ENCODE measurements at regions of chr6 and their contacts with region 1.

Region 1: GRCh38 chr6:33535104-33535603 is 44.9 kb downstream of the BAK1 start:
- DNase-seq: no peak
- ATAC-seq: no peak
- H3K4me3 ChIP-seq: no peak overlapping the region
- H3K4me3 Mint-ChIP-seq: no peak overlapping the region
- H3K27ac ChIP-seq: no peak overlapping the region
- H3K27ac Mint-ChIP-seq: peak overlapping the region; percentile 18
- H3K4me1 ChIP-seq: peaks cover 17% of the 10 kb centered on the region
- H3K4me1 Mint-ChIP-seq: peaks cover 18% of the 10 kb centered on the region
- H3K27me3 ChIP-seq: no peaks in the 10 kb centered on the region
- H3K27me3 Mint-ChIP-seq: no peaks in the 10 kb centered on the region
- CTCF ChIP-seq: no peak

Region 2: DNA sequence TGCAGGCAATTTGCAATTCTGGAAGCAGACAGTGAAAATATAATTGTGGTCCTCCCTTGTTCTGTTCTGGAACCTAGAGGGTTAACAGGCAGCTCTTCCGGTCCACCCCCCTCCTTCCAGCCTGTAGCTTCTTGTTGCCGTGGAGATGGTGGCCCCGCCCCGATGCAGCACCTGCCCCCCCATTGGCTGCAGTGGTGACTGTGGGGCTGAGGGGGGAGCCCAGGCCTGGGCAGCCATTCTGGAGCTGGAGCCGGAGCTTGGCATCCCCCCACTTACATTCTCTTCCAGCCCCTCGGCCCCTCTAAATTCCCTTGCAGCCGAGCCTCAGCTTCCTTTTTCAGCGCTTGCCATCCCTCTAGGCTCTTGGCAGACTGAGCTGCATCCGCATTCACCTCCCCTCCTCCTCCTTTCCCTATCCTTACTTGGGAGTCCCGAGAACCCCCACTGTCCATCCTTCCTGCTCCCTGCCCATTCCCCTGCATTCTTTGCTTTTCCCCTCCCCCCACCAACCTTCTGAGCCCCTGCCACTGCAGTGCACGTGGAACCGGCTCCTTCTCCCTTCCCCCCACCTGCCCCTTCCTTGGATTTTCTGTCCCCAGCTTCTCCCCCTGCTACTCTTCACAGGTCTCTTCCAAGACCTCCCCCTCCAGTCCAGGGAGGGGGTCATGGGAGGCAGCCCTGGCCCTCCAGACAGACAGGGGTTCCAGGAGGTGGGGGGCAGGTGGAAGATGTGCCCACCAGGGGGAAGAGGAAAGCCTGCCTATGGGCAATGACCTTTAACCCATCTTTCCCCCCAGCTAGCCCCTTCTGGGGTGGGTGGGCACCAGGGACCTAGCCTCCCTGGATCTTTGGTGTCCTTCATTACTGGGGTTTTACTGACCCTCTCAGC is 103.9 kb before region 1 on chr6:
- CTCF ChIA-PET with region 1: no interaction called
- POLR2A ChIA-PET with region 1: interaction called, 5 read pairs
- intact Hi-C with region 1: loop called in 1 of 2 experiments (anchors 2 kb)
- DNase-seq: peak; percentile 74 to 92 (median 85)
- ATAC-seq: peak; percentile 66
- H3K4me3 ChIP-seq: peak overlapping the region; percentile 71
- H3K4me3 Mint-ChIP-seq: peak overlapping the region; percentile 93
- H3K27ac ChIP-seq: peak overlapping the region; percentile 52 to 64
- H3K27ac Mint-ChIP-seq: peak overlapping the region; percentile 92
- H3K4me1 ChIP-seq: peaks cover 63% of the 10 kb centered on the region
- H3K4me1 Mint-ChIP-seq: peaks cover 65% of the 10 kb centered on the region
- H3K27me3 ChIP-seq: no peaks in the 10 kb centered on the region
- H3K27me3 Mint-ChIP-seq: no peaks in the 10 kb centered on the region
- CTCF ChIP-seq: no peak

Region 3: GRCh38 chr6:33547499-33547898 is 12.3 kb after region 1 on chr6:
- CTCF ChIA-PET with region 1: interaction called, 3 read pairs
- POLR2A ChIA-PET with region 1: interaction called, 11 read pairs
- intact Hi-C with region 1: no loop called
- DNase-seq: no peak
- ATAC-seq: no peak
- H3K4me3 ChIP-seq: no peak overlapping the region
- H3K4me3 Mint-ChIP-seq: no peak overlapping the region
- H3K27ac ChIP-seq: no peak overlapping the region
- H3K27ac Mint-ChIP-seq: peak overlapping the region; percentile 30
- H3K4me1 ChIP-seq: peaks cover 16% of the 10 kb centered on the region
- H3K4me1 Mint-ChIP-seq: peaks cover 22% of the 10 kb centered on the region
- H3K27me3 ChIP-seq: no peaks in the 10 kb centered on the region
- H3K27me3 Mint-ChIP-seq: no peaks in the 10 kb centered on the region
- CTCF ChIP-seq: no peak

Region 4: GRCh38 chr6:33579828-33580714 is 44.9 kb after region 1 on chr6 and contains the start of gene BAK1:
- CTCF ChIA-PET with region 1: interaction called, 5 read pairs
- POLR2A ChIA-PET with region 1: interaction called, 23 read pairs
- intact Hi-C with region 1: loop called in 1 of 2 experiments (anchors 2 kb)
- DNase-seq: peak; percentile 64 to 92 (median 78)
- ATAC-seq: peak; percentile 93
- H3K4me3 ChIP-seq: peak within 1 kb of the TSS; percentile 99
- H3K4me3 Mint-ChIP-seq: peak within 1 kb of the TSS; percentile 96
- H3K27ac ChIP-seq: peak within 1 kb of the TSS; percentile 82 to 88
- H3K27ac Mint-ChIP-seq: peak within 1 kb of the TSS; percentile 97
- H3K4me1 ChIP-seq: peaks cover 51% of the 10 kb centered on the region
- H3K4me1 Mint-ChIP-seq: peaks cover 44% of the 10 kb centered on the region
- H3K27me3 ChIP-seq: no peaks in the 10 kb centered on the region
- H3K27me3 Mint-ChIP-seq: no peaks in the 10 kb centered on the region
- CTCF ChIP-seq: peak; percentile 63
- total RNA-seq, gene BAK1: 38.3 to 40.8 TPM

Measured in CD4-positive, alpha-beta T cell (primary cell).